Heart left ventricle (tissue), 16 donors: ENCODE measurements at regions of chr19 and their contacts with region 1.

Region 1: DNA sequence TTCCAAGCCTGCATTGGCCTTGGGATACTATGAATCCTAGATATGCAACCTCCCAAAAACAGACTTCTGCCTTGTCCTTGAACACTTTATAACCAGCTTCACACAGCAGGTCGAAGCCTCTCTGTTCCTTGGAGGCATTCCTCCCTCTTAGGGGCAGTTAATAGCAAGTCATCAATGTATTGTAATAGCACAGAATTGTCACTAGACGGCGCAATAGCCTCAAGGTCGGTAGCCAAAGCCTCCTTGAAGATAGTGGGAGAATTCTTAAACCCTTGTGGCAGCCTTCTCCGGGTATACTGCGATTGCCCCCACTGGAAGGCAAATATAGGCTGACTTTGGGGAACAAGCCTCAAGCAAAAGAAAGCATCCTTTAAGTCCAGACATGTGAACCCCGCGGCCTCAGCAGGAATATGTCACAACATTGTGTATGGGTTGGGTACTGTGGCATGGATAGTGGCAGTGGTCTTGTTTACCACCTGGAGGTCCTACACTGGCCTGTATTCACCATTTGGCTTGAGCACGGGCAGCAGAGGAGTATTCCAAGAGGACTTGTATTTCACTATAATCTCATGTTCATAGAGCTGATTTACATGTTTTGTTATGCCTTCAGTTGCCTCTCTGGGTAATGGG is 61.1 kb downstream of the ZNF431 start:
- DNase-seq: no peak
- ATAC-seq: peak in 1 of 4 donors; percentile 48
- H3K4me3 ChIP-seq: no peak overlapping the region
- H3K27ac ChIP-seq: no peak overlapping the region
- H3K4me1 ChIP-seq: peaks cover 0 to 3% (median 0%) of the 10 kb centered on the region in 12 donors
- H3K27me3 ChIP-seq: no peaks in the 10 kb centered on the region
- CTCF ChIP-seq: peak; percentile 49 to 75 (median 66)
- POLR2A ChIP-seq: no peak

Region 2: GRCh38 chr19:21474671-21475181 is 271.7 kb after region 1 on chr19:
- intact Hi-C with region 1: loop called in 1 of 10 experiments (anchors 10 kb)
- DNase-seq: peak; percentile 80 to 91 (median 83)
- ATAC-seq: peak; percentile 98 to 100 (median 100)
- H3K4me3 ChIP-seq: peak overlapping the region; percentile 11 to 68 (median 58)
- H3K27ac ChIP-seq: no peak overlapping the region
- H3K4me1 ChIP-seq: peaks cover 0 to 15% (median 4%) of the 10 kb centered on the region in 12 donors
- H3K27me3 ChIP-seq: peaks cover 0 to 3% (median 0%) of the 10 kb centered on the region in 9 donors
- CTCF ChIP-seq: peak in 7 of 12 donors; percentile 6 to 33 (median 10)
- POLR2A ChIP-seq: no peak

Region 3: DNA sequence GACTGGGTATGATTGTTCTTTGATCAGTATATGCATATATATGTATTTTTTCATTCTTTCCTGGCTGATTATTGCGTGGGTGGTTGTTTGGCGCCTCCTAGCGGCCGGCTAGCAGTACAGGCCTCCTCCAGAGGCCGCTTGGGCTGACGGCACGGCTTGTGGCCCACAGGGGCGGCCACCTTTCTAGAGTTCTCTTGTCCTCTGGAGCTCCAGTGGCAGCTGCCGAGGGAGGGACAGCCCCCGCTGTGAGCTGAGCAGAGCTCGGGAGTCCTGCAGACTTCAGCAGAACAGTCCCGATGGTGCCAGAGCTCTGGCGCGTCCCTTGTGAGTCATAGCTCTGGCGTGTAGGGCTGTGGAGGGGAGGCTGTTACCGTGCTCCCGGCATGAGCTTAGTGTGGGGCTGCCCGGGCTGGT is 279.9 kb after region 1 on chr19:
- intact Hi-C with region 1: loop called in 9 of 10 experiments (anchors 1 to 10 kb)
- DNase-seq: peak; percentile 36 to 80 (median 62)
- ATAC-seq: peak; percentile 80 to 96 (median 92)
- H3K4me3 ChIP-seq: peak overlapping the region in 4 of 12 donors; percentile 7 to 38 (median 32)
- H3K27ac ChIP-seq: peak overlapping the region in 1 of 12 donors; percentile 44
- H3K4me1 ChIP-seq: no peaks in the 10 kb centered on the region
- H3K27me3 ChIP-seq: no peaks in the 10 kb centered on the region
- CTCF ChIP-seq: peak; percentile 65 to 95 (median 87)
- POLR2A ChIP-seq: no peak

Region 4: GRCh38 chr19:21698215-21698614 is 495.2 kb after region 1 on chr19:
- intact Hi-C with region 1: loop called in 7 of 10 experiments (anchors 5 to 10 kb)
- DNase-seq: no peak
- ATAC-seq: peak in 1 of 4 donors; percentile 43
- H3K4me3 ChIP-seq: no peak overlapping the region
- H3K27ac ChIP-seq: no peak overlapping the region
- H3K4me1 ChIP-seq: peaks cover 0 to 6% (median 0%) of the 10 kb centered on the region in 12 donors
- H3K27me3 ChIP-seq: no peaks in the 10 kb centered on the region
- CTCF ChIP-seq: peak; percentile 55 to 75 (median 67)
- POLR2A ChIP-seq: no peak

Region 5: GRCh38 chr19:22545751-22546150 is 1342.8 kb after region 1 on chr19:
- intact Hi-C with region 1: loop called in 1 of 10 experiments (anchors 10 kb)
- DNase-seq: peak in 1 of 5 donors; percentile 13
- ATAC-seq: peak in 2 of 4 donors; percentile 66
- H3K4me3 ChIP-seq: no peak overlapping the region
- H3K27ac ChIP-seq: no peak overlapping the region
- H3K4me1 ChIP-seq: no peaks in the 10 kb centered on the region
- H3K27me3 ChIP-seq: no peaks in the 10 kb centered on the region
- CTCF ChIP-seq: peak; percentile 31 to 74 (median 61)
- POLR2A ChIP-seq: no peak